ENCODE measurements at regions of chr5 and their contacts with region 1.

Region 1: DNA sequence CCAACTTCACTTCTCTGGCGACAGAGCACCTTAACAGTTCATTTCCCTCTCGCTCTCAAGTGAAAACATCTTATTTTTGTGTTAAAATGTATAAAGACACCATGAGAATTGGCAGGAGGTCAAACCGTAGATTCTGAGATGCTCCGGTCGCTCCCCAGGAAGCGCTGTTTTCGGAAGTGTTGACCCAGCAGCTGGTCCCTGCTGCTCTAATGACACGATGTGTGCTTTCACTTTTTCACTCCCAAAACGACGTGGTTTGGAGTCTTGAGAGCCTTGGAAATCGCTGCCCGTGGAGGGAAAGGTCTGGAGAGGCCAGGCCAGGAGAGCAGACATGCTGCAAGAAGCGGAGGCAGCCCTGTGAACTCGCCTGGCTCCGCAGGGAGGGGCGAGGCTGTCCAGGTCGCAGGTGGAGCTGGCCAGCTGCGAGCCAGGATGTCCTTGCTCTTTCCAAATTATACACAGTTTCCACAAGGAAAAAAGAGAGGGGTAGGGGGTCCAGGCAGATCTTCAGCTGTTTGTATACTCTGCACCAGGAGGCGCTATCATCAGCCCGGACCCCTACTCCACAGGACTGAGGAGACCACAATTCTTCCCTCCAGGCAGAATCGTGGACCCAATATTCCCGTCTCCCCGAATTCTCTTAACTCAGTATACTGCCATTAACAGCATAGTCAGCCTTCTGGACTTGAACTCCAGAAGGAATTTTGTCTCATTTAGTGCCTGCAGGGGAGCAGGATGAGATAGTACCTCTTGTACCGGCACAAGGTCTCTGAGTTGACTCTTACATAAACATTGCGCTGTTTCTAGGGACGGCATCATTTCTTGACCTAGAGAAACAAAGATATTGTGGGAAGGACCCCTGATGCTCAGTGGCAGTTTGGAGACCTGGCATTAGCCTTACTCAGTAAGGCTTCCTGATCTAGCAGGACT is 248.6 kb upstream of the ANKRD55 start:
- DNase-seq: peak; percentile 23 to 62
- ATAC-seq: peak in 2 of 4 donors; percentile 34 to 69
- H3K4me3 ChIP-seq: peak overlapping the region; percentile 72
- H3K27ac ChIP-seq: peak overlapping the region; percentile 81
- H3K4me1 ChIP-seq: no peaks in the 10 kb centered on the region
- H3K27me3 ChIP-seq: peaks cover 0 to 40% (median 7%) of the 10 kb centered on the region in 3 donors
- CTCF ChIP-seq: no peak

Region 2: GRCh38 chr5:56814963-56815658 is 333.4 kb after region 1 on chr5 and contains the start of gene MAP3K1:
- intact Hi-C with region 1: loop called in 1 of 2 experiments (anchors 10 kb)
- DNase-seq: peak; percentile 80 to 88
- ATAC-seq: peak; percentile 84 to 90 (median 87)
- H3K4me3 ChIP-seq: peak within 1 kb of the TSS; percentile 75
- H3K27ac ChIP-seq: peak within 1 kb of the TSS; percentile 90
- H3K4me1 ChIP-seq: peaks cover 24% of the 10 kb centered on the region
- H3K27me3 ChIP-seq: no peaks in the 10 kb centered on the region
- CTCF ChIP-seq: no peak
- total RNA-seq, gene MAP3K1: 3.0 to 5.2 (median 4.2) TPM

Region 3: GRCh38 chr5:58071566-58071965 is 1589.9 kb after region 1 on chr5:
- intact Hi-C with region 1: no loop called
- DNase-seq: peak in 1 of 2 donors; percentile 51
- ATAC-seq: peak; percentile 80 to 99 (median 92)
- H3K4me3 ChIP-seq: no peak overlapping the region
- H3K27ac ChIP-seq: peak overlapping the region; percentile 50
- H3K4me1 ChIP-seq: peaks cover 12% of the 10 kb centered on the region
- H3K27me3 ChIP-seq: no peaks in the 10 kb centered on the region
- CTCF ChIP-seq: no peak

Measured in psoas muscle (tissue), 8 donors.